Naive thymus-derived CD4-positive, alpha-beta T cell (primary cell): ENCODE measurements at regions of chr3 and their contacts with region 1.

Region 1: DNA sequence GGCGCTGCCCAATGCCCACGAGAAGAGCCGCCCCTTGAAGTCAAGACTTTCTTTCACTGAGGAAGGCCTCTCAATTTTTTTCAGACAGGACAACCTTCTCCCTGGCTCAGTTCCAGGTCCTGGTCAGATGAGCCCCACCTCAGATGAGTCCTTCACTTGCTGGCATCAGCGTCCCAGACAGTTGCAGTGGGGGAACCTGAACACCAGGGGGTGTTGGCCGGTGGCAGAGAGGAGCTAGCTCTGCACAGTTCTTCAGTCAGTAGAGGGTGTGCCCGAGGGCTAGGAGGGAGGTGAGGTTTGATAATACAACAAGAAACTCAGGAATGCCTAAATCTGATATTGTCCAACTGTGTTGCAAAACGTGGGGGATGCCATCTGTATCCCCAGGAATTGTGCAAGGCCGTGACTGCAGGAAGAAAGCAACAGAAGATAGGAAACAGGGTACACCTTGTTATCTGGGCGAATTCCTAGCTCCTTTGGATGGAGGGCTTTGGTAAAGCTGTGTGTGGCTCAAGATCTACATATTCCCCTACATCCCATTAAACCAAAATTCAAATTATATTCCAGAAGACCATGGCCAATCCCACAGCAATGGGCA is 34.3 kb downstream of the CCR3 start:
- DNase-seq: peak; percentile 32 to 71 (median 58)
- ATAC-seq: peak; percentile 93
- H3K4me3 ChIP-seq: no peak overlapping the region
- H3K4me3 Mint-ChIP-seq: peak overlapping the region in 1 of 10 donors; percentile 31
- H3K27ac ChIP-seq: no peak overlapping the region
- H3K27ac Mint-ChIP-seq: peak overlapping the region in 1 of 9 donors; percentile 80
- H3K4me1 ChIP-seq: peaks cover 5 to 43% of the 10 kb centered on the region in 2 donors
- H3K4me1 Mint-ChIP-seq: peaks cover 16 to 54% (median 22%) of the 10 kb centered on the region in 7 donors
- H3K27me3 ChIP-seq: no peaks in the 10 kb centered on the region
- H3K27me3 Mint-ChIP-seq: peaks cover 0 to 39% (median 0%) of the 10 kb centered on the region in 5 donors

Region 2: DNA sequence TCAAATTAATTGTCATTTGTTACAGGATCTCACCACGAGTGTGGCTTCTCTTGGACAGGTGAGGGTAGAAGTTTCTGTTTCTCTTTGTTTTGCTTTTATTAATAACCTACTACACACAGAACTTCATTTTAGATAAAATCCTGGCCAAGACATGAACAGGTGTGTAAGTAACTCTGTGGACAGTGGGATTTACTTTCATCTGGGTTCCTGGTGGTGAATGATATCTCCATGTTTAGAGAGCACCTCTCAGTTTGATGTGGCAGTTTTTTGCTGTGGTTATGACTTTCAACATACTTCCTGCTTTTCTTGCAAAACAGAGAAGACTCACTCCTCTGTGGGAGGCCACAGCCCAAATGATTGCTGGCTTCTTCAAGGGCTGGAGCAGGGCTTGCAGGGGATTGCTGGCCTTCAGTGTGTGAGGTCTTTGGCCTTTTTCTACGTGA is 178.3 kb before region 1 on chr3:
- CTCF ChIA-PET with region 1: no interaction called
- POLR2A ChIA-PET with region 1: no interaction called
- intact Hi-C with region 1: loop called in 1 of 2 experiments (anchors 5 kb)
- DNase-seq: peak in 7 of 9 donors; percentile 30 to 63 (median 52)
- ATAC-seq: peak; percentile 70
- H3K4me3 ChIP-seq: no peak overlapping the region
- H3K4me3 Mint-ChIP-seq: peak overlapping the region; percentile 30 to 80 (median 71)
- H3K27ac ChIP-seq: no peak overlapping the region
- H3K27ac Mint-ChIP-seq: peak overlapping the region; percentile 22 to 98 (median 75)
- H3K4me1 ChIP-seq: peaks cover 25 to 36% of the 10 kb centered on the region in 2 donors
- H3K4me1 Mint-ChIP-seq: peaks cover 28 to 73% (median 35%) of the 10 kb centered on the region in 7 donors
- H3K27me3 ChIP-seq: no peaks in the 10 kb centered on the region
- H3K27me3 Mint-ChIP-seq: peaks cover 0 to 7% (median 0%) of the 10 kb centered on the region in 5 donors

Region 3: DNA sequence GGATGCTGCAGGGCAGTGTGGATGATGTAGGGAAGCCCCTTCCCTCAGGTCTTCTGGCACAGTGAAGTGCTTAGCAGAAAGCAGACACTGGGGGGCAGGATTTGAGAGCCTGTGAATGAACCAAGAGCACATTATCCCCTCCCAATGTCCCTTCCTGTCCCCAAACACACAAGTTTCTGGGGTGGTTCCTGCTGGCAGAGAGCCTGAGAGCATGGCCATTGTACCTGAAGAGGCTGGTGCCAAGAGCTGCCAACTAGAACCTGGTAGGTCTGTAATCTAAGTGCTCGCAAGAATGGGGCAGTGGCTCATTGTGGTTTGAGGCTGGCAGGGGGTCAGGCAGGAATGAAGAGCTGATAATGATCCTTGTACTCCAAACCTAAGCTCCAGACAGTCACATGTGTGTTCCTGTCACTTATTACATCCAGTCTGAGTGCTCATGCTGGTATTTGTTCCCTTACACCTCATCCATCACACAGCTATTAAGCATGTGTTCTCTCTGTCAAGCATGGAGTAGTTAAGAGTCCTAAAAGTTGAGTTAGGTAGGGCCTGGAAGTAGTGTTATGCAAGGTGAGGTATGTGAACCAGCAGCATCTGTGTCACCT is 61.7 kb before region 1 on chr3:
- CTCF ChIA-PET with region 1: interaction called, 3 read pairs
- POLR2A ChIA-PET with region 1: no interaction called
- intact Hi-C with region 1: loop called in 1 of 2 experiments (anchors 2 kb)
- DNase-seq: no peak
- ATAC-seq: peak; percentile 27
- H3K4me3 ChIP-seq: no peak overlapping the region
- H3K4me3 Mint-ChIP-seq: no peak overlapping the region
- H3K27ac ChIP-seq: no peak overlapping the region
- H3K27ac Mint-ChIP-seq: no peak overlapping the region
- H3K4me1 ChIP-seq: peaks cover 14 to 26% of the 10 kb centered on the region in 2 donors
- H3K4me1 Mint-ChIP-seq: peaks cover 0 to 27% (median 0%) of the 10 kb centered on the region in 7 donors
- H3K27me3 ChIP-seq: no peaks in the 10 kb centered on the region
- H3K27me3 Mint-ChIP-seq: peaks cover 0 to 31% (median 0%) of the 10 kb centered on the region in 5 donors

Region 4: DNA sequence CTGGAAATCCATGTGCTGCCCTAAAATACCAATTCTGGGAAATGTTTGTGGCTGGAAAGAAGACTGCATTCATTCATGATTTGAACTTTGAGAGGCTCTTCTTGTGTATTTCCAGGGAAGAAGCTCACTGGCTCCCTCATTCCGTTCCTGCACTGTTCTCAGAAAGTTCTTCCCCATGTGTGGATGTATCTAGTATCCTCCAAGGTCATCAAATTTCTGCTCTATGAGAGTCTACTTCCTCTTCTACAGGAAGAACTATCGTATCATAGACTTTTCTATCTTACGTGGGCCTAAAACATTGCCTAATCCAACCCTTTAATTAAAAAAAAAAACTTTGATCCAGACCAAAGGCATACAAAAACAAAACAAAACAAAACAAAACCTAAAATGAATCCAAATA is 31.5 kb before region 1 on chr3:
- CTCF ChIA-PET with region 1: no interaction called
- POLR2A ChIA-PET with region 1: no interaction called
- intact Hi-C with region 1: no loop called
- DNase-seq: no peak
- ATAC-seq: no peak
- H3K4me3 ChIP-seq: no peak overlapping the region
- H3K4me3 Mint-ChIP-seq: no peak overlapping the region
- H3K27ac ChIP-seq: no peak overlapping the region
- H3K27ac Mint-ChIP-seq: no peak overlapping the region
- H3K4me1 ChIP-seq: no peaks in the 10 kb centered on the region
- H3K4me1 Mint-ChIP-seq: peaks cover 0 to 9% (median 0%) of the 10 kb centered on the region in 7 donors
- H3K27me3 ChIP-seq: no peaks in the 10 kb centered on the region
- H3K27me3 Mint-ChIP-seq: peaks cover 0 to 35% (median 0%) of the 10 kb centered on the region in 5 donors

Region 5: DNA sequence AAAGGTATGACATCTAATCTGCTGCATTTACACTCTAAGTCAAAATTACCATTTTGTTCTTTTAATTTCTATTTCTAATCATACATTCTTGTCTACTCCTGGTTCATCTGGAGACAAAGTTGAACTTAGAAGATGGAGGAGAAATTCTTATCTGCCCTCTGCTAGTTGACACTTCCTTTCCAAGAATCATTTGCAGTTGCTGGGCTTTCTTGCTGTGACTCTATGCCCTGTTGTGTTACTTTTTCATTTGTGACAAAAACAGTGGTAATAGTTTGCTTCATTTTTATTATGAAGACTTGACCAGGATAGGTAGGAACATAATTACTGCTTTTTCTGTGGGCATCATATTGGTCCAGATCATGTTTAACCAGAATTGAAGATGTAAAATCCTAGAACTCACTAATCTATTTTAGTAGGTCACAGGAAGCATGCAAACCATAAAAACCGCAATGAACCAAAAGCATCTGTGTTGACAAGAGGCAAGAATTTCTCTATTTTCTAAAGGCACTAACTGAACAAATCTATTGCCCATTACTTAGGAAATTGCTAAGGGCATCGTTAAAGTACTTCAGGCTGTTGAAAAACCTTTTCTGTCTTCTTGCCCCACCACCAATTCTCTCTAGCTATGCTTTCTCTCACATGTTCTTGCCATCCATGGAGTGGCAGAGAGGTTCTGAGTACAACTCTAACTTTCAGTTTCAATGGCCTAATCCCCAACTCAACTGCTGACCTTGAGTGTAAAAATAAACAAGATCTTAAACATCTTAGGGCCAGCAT is 73.1 kb after region 1 on chr3:
- CTCF ChIA-PET with region 1: interaction called, 3 read pairs
- POLR2A ChIA-PET with region 1: no interaction called
- intact Hi-C with region 1: loop called in 1 of 2 experiments (anchors 1 kb)
- DNase-seq: peak in 6 of 9 donors; percentile 17 to 44 (median 25)
- ATAC-seq: peak; percentile 32
- H3K4me3 ChIP-seq: peak overlapping the region; percentile 7
- H3K4me3 Mint-ChIP-seq: peak overlapping the region in 9 of 10 donors; percentile 57 to 82 (median 74)
- H3K27ac ChIP-seq: no peak overlapping the region
- H3K27ac Mint-ChIP-seq: peak overlapping the region; percentile 4 to 92 (median 71)
- H3K4me1 ChIP-seq: peaks cover 42 to 52% of the 10 kb centered on the region in 2 donors
- H3K4me1 Mint-ChIP-seq: peaks cover 51 to 71% (median 71%) of the 10 kb centered on the region in 7 donors
- H3K27me3 ChIP-seq: no peaks in the 10 kb centered on the region
- H3K27me3 Mint-ChIP-seq: peaks cover 0 to 27% (median 0%) of the 10 kb centered on the region in 5 donors

Region 6: DNA sequence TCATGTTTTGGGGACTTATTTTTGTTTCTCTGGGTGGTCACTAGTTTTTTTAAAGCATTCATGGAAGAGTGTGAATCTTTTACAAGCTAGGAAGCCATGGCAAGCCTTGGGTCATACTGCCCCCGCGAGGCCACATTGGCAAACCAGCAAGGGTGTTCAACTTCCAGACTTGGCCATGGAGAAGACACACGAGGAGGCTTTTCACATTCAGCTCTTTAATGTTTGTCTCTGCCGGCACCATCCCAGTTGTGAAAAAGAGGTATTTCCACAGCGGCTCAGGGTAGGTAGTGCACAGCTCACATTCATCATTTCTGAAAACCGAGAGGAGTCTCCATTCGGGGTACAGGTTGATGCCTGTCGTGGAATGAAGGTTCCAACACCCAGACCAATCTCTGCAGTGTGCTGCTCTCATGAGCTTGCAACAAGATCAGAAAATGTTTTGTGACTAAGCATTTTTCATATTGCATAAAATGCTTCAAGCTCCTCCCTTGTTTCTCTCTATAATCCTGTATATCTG is 101.9 kb after region 1 on chr3:
- CTCF ChIA-PET with region 1: interaction called, 29 read pairs
- POLR2A ChIA-PET with region 1: interaction called, 9 read pairs
- intact Hi-C with region 1: loop called in 1 of 2 experiments (anchors 1 kb)
- DNase-seq: peak; percentile 24 to 67 (median 46)
- ATAC-seq: peak; percentile 68
- H3K4me3 ChIP-seq: no peak overlapping the region
- H3K4me3 Mint-ChIP-seq: peak overlapping the region in 1 of 10 donors; percentile 8
- H3K27ac ChIP-seq: no peak overlapping the region
- H3K27ac Mint-ChIP-seq: peak overlapping the region in 2 of 9 donors; percentile 0 to 4
- H3K4me1 ChIP-seq: peaks cover 3 to 40% of the 10 kb centered on the region in 2 donors
- H3K4me1 Mint-ChIP-seq: peaks cover 23 to 48% (median 43%) of the 10 kb centered on the region in 7 donors
- H3K27me3 ChIP-seq: no peaks in the 10 kb centered on the region
- H3K27me3 Mint-ChIP-seq: peaks cover 0 to 24% (median 0%) of the 10 kb centered on the region in 5 donors

Region 7: DNA sequence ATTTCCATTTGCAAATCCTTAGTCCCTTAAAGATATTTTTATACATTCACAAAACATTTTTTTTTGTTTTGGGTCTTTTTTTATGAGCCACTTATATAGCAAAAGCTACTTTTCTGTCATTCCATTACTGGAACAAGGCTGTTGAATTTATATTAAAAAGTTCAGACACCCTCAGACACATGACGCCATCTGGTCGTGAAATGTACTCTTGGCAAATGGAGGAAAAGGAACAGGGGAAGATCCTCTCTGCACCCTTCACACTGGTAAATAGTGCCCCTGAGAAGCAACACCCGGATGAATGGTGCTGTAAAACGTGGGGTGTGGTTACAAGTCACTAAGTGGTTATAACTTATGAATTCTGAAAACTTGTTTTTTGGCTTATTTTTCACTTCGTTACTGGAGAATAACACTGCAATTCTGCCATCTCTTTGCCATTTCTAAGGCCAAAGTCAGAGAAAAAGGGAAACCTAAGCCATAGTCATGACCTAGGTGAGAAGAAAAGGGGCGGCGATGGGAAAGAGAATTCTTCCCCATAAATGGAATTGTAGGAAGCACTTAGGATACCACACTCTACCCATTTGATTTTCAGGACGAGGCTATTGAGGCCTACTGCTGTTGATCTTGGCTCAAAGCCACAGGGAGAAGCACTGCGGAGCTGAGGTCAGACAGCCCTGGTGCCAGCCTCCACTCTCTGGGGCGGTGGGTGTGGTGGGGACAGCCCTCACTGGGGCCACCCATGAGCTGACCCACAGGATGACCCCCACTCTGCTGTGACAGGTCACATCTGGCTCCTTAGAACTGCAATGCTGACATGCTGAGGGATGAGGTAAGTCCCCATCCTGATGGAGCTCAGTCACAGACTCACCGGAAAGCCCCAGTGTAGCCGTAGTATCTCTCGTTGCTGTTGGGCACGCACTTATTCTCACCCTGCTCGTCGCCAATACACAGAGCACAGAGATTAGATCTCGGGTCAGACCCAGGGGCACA is 166.3 kb after region 1 on chr3:
- CTCF ChIA-PET with region 1: no interaction called
- POLR2A ChIA-PET with region 1: no interaction called
- intact Hi-C with region 1: loop called in 1 of 2 experiments (anchors 5 kb)
- DNase-seq: peak in 2 of 9 donors; percentile 35 to 43
- ATAC-seq: peak; percentile 56
- H3K4me3 ChIP-seq: no peak overlapping the region
- H3K4me3 Mint-ChIP-seq: no peak overlapping the region
- H3K27ac ChIP-seq: no peak overlapping the region
- H3K27ac Mint-ChIP-seq: peak overlapping the region in 1 of 9 donors; percentile 58
- H3K4me1 ChIP-seq: peaks cover 12 to 13% of the 10 kb centered on the region in 2 donors
- H3K4me1 Mint-ChIP-seq: peaks cover 15 to 36% (median 27%) of the 10 kb centered on the region in 7 donors
- H3K27me3 ChIP-seq: no peaks in the 10 kb centered on the region
- H3K27me3 Mint-ChIP-seq: peaks cover 0 to 8% (median 0%) of the 10 kb centered on the region in 5 donors

Region 8: DNA sequence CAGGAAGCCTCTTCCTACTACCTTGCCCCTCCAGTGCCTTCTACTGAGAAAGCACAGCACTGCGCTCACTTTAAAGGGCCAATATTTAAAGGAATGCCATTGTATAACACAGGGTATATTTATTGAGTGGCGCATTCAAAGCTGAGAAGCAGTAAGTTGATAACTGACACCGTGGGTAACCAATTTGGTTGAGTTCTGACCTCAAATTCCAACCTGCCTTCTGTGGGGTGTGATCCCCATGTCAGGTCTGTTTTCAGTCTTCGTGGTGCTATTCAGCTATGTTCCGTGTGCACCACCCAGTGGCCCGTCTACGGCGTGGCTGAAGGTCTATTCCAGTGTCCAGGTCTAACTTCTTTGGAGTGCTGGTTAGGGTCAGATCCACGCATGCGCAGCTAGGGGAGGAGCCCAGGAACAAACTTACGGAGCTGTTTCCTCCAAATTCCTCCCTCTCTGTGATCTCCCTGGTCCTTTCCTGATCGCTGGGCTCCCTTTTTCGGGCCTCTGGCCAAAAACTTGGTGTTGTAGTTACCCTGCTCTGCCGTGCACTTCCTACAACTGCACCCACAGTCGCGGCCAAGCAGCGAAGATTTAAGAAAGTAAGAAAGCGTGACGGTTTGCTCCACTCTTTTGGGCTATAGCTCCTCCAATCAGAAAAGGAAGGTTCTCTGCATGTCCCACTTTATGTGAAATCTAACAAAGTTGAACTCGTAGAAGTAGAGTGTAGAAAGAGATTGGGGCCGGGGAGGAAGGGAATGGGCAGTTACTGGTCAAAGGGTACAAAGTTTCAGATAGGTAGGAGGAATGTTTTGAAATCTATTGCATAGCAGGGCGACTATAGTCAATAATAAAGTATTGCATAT is 281.8 kb after region 1 on chr3:
- CTCF ChIA-PET with region 1: no interaction called
- POLR2A ChIA-PET with region 1: interaction called, 3 read pairs
- intact Hi-C with region 1: loop called in 1 of 2 experiments (anchors 1 kb)
- DNase-seq: peak; percentile 58 to 77 (median 70)
- ATAC-seq: peak; percentile 99
- H3K4me3 ChIP-seq: peak overlapping the region; percentile 37
- H3K4me3 Mint-ChIP-seq: peak overlapping the region; percentile 79 to 89 (median 80)
- H3K27ac ChIP-seq: peak overlapping the region; percentile 11
- H3K27ac Mint-ChIP-seq: peak overlapping the region; percentile 19 to 93 (median 51)
- H3K4me1 ChIP-seq: peaks cover 5 to 12% of the 10 kb centered on the region in 2 donors
- H3K4me1 Mint-ChIP-seq: peaks cover 9 to 20% (median 17%) of the 10 kb centered on the region in 7 donors
- H3K27me3 ChIP-seq: no peaks in the 10 kb centered on the region
- H3K27me3 Mint-ChIP-seq: peaks cover 0 to 72% (median 0%) of the 10 kb centered on the region in 5 donors